CD4-positive, alpha-beta T cell (primary cell): ENCODE measurements at regions of chr12 and their contacts with region 1.

Region 1: GRCh38 chr12:106302401-106303201 is at the start of gene TCP11L2:
- DNase-seq: peak; percentile 89 to 97 (median 92)
- ATAC-seq: peak; percentile 49
- H3K4me3 ChIP-seq: peak within 1 kb of the TSS; percentile 97
- H3K4me3 Mint-ChIP-seq: peak within 1 kb of the TSS; percentile 99
- H3K27ac ChIP-seq: peak within 1 kb of the TSS; percentile 99 to 100
- H3K27ac Mint-ChIP-seq: peak within 1 kb of the TSS; percentile 99
- H3K4me1 ChIP-seq: peaks cover 49% of the 10 kb centered on the region
- H3K4me1 Mint-ChIP-seq: peaks cover 64% of the 10 kb centered on the region
- H3K27me3 ChIP-seq: no peaks in the 10 kb centered on the region
- H3K27me3 Mint-ChIP-seq: no peaks in the 10 kb centered on the region
- CTCF ChIP-seq: no peak
- total RNA-seq, gene TCP11L2: 139 to 144 TPM

Region 2: GRCh38 chr12:104986022-104986941 is 1316.3 kb before region 1 on chr12 and contains the start of gene NOPCHAP1:
- CTCF ChIA-PET with region 1: no interaction called
- POLR2A ChIA-PET with region 1: no interaction called
- intact Hi-C with region 1: loop called in 1 of 2 experiments (anchors 10 kb)
- DNase-seq: peak; percentile 62 to 89 (median 80)
- ATAC-seq: peak; percentile 99
- H3K4me3 ChIP-seq: peak within 1 kb of the TSS; percentile 73
- H3K4me3 Mint-ChIP-seq: peak within 1 kb of the TSS; percentile 97
- H3K27ac ChIP-seq: no peak within 1 kb of the TSS
- H3K27ac Mint-ChIP-seq: peak within 1 kb of the TSS; percentile 68
- H3K4me1 ChIP-seq: peaks cover 21% of the 10 kb centered on the region
- H3K4me1 Mint-ChIP-seq: peaks cover 39% of the 10 kb centered on the region
- H3K27me3 ChIP-seq: no peaks in the 10 kb centered on the region
- H3K27me3 Mint-ChIP-seq: peaks cover 4% of the 10 kb centered on the region
- CTCF ChIP-seq: no peak
- total RNA-seq, gene NOPCHAP1: 10.1 to 11.8 TPM

Region 3: DNA sequence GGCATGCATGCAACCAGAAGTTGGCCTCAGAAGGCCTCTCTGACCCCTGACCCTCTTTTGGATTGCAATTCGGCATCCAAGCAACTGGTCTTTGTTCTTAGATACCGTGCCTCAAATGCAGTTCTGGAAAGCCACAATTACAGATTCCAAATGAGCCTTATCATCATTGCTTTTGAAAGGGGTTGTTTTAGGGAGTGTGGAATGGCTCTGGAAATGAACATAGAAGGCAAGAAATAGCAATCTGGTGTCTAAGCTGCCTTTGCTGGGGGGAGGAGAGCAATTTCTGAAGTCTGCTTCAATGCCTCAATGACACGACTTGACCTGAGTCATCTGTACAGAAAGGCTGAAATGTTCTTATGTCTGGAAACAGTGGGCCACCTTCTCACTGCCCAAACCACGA is 413.9 kb before region 1 on chr12:
- CTCF ChIA-PET with region 1: no interaction called
- POLR2A ChIA-PET with region 1: no interaction called
- intact Hi-C with region 1: no loop called
- DNase-seq: no peak
- ATAC-seq: no peak
- H3K4me3 ChIP-seq: no peak overlapping the region
- H3K4me3 Mint-ChIP-seq: no peak overlapping the region
- H3K27ac ChIP-seq: no peak overlapping the region
- H3K27ac Mint-ChIP-seq: no peak overlapping the region
- H3K4me1 ChIP-seq: no peaks in the 10 kb centered on the region
- H3K4me1 Mint-ChIP-seq: no peaks in the 10 kb centered on the region
- H3K27me3 ChIP-seq: no peaks in the 10 kb centered on the region
- H3K27me3 Mint-ChIP-seq: no peaks in the 10 kb centered on the region
- CTCF ChIP-seq: no peak

Region 4: GRCh38 chr12:106247674-106248311 is 54.8 kb before region 1 on chr12 and contains the start of gene CKAP4:
- CTCF ChIA-PET with region 1: interaction called, 4 read pairs
- POLR2A ChIA-PET with region 1: interaction called, 157 read pairs
- intact Hi-C with region 1: loop called (anchors 1 to 2 kb)
- DNase-seq: peak; percentile 11 to 88 (median 54)
- ATAC-seq: peak; percentile 51
- H3K4me3 ChIP-seq: peak within 1 kb of the TSS; percentile 75
- H3K4me3 Mint-ChIP-seq: peak within 1 kb of the TSS; percentile 89
- H3K27ac ChIP-seq: peak within 1 kb of the TSS; percentile 81 to 89
- H3K27ac Mint-ChIP-seq: peak within 1 kb of the TSS; percentile 94
- H3K4me1 ChIP-seq: peaks cover 37% of the 10 kb centered on the region
- H3K4me1 Mint-ChIP-seq: peaks cover 43% of the 10 kb centered on the region
- H3K27me3 ChIP-seq: no peaks in the 10 kb centered on the region
- H3K27me3 Mint-ChIP-seq: no peaks in the 10 kb centered on the region
- CTCF ChIP-seq: no peak
- total RNA-seq, gene CKAP4: 14.7 to 15.7 TPM

Region 5: DNA sequence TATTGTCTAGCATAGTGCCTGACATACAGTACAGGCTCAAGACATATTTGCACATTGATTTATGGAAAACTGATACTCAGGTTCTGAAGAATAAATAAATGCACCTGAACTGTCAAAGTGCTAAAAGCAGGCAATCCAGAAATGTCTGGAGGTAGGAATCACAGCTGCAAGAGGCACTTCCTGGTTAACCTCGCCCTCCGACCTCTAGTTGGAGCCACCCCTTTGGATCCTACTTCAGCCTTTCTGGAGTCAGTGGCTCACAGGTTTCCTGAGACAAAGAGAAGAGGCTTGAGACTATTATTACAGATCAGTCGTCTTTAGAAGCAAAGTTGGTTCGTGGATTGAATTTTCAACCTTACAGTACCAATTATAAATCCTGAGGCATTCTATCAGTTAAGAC is 12.9 kb after region 1 on chr12:
- CTCF ChIA-PET with region 1: no interaction called
- POLR2A ChIA-PET with region 1: interaction called, 14 read pairs
- intact Hi-C with region 1: no loop called
- DNase-seq: no peak
- ATAC-seq: no peak
- H3K4me3 ChIP-seq: no peak overlapping the region
- H3K4me3 Mint-ChIP-seq: no peak overlapping the region
- H3K27ac ChIP-seq: no peak overlapping the region
- H3K27ac Mint-ChIP-seq: peak overlapping the region; percentile 8
- H3K4me1 ChIP-seq: peaks cover 7% of the 10 kb centered on the region
- H3K4me1 Mint-ChIP-seq: peaks cover 27% of the 10 kb centered on the region
- H3K27me3 ChIP-seq: no peaks in the 10 kb centered on the region
- H3K27me3 Mint-ChIP-seq: no peaks in the 10 kb centered on the region
- CTCF ChIP-seq: no peak

Region 6: GRCh38 chr12:106331599-106331998 is 29.0 kb after region 1 on chr12:
- CTCF ChIA-PET with region 1: interaction called, 4 read pairs
- POLR2A ChIA-PET with region 1: interaction called, 10 read pairs
- intact Hi-C with region 1: no loop called
- DNase-seq: no peak
- ATAC-seq: no peak
- H3K4me3 ChIP-seq: no peak overlapping the region
- H3K4me3 Mint-ChIP-seq: no peak overlapping the region
- H3K27ac ChIP-seq: no peak overlapping the region
- H3K27ac Mint-ChIP-seq: peak overlapping the region; percentile 27
- H3K4me1 ChIP-seq: no peaks in the 10 kb centered on the region
- H3K4me1 Mint-ChIP-seq: peaks cover 31% of the 10 kb centered on the region
- H3K27me3 ChIP-seq: no peaks in the 10 kb centered on the region
- H3K27me3 Mint-ChIP-seq: no peaks in the 10 kb centered on the region
- CTCF ChIP-seq: no peak

Region 7: DNA sequence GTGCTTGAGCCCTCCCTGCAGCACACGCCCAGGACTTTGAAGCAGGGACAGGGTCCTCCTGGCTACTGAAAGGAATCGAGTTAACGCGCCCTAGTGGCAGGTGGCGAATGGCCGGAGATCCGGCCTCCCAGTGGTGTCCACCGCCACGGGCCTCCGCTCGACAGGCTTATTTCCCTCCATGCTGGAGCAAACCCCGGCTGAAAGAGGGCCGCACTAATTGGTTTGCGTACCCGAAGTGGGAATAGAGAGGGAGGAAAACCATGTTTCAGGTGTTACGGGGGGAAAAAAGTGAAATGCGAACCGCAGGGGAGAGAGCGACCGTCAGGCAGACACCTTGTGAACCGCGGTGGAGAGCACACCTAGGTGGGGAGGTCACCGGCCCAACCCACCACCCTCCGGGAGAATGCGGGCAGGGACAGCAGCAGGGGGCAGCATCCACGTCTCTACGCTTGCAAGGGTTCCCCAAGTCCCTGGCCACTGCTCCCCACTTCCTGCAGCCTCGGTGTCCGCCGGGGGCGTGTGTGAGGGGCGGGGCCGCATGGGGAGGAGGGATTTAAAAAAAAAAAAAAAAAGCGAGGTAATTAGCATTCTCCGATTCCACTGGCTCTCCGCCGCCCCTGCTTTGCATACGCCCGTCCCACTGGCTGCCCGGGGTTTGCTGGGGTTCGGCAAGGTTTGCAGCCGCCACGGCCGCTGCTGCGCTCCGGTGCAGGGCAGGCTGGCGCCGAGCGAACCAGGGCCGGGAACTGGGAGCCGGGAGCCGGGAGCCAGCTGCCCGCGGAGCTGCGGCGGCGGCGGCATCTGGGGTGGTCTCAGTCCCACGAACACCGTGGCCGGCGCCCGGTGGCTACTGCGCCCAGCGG is 1015.4 kb after region 1 on chr12:
- CTCF ChIA-PET with region 1: no interaction called
- POLR2A ChIA-PET with region 1: no interaction called
- intact Hi-C with region 1: loop called in 1 of 2 experiments (anchors 2 kb)
- DNase-seq: peak; percentile 69 to 94 (median 84)
- ATAC-seq: peak; percentile 56
- H3K4me3 ChIP-seq: peak overlapping the region; percentile 95
- H3K4me3 Mint-ChIP-seq: peak overlapping the region; percentile 88
- H3K27ac ChIP-seq: peak overlapping the region in 1 of 2 donors; percentile 29
- H3K27ac Mint-ChIP-seq: peak overlapping the region; percentile 78
- H3K4me1 ChIP-seq: peaks cover 38% of the 10 kb centered on the region
- H3K4me1 Mint-ChIP-seq: peaks cover 36% of the 10 kb centered on the region
- H3K27me3 ChIP-seq: no peaks in the 10 kb centered on the region
- H3K27me3 Mint-ChIP-seq: no peaks in the 10 kb centered on the region
- CTCF ChIP-seq: peak; percentile 34

Region 8: DNA sequence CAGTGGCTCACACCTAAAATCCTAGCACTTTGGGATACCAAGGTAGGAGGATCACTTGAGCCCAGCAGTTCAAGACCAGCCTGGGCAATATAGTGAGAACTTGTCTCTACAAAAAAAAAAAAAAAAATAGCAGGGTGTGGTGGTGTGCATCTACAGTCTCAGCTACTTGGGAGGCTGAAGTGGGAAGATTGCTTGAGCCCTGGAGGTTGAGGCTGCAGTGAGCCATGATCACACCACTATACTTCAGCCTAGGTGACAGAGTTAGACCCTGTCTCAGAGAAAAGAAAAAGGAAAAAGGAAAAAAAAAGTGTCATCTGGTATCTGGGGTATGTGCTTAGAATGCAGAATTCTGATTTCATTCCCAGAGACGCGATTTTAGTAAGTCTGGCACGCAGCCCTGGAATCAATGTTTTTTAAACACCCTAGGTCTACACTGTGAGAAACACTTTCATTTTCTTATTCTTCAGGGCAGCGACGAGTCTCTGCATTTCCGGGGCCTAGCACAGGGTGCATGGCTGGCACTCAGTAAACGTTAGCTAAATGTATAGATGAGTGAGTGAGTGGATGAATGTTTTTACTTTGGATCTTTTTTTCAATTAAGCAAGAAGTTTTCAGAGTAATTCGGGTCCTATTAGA is 1139.2 kb after region 1 on chr12:
- CTCF ChIA-PET with region 1: no interaction called
- POLR2A ChIA-PET with region 1: no interaction called
- intact Hi-C with region 1: no loop called
- DNase-seq: peak in 3 of 14 experiments; percentile 11 to 30 (median 24)
- ATAC-seq: peak; percentile 57
- H3K4me3 ChIP-seq: peak overlapping the region; percentile 2
- H3K4me3 Mint-ChIP-seq: peak overlapping the region; percentile 75
- H3K27ac ChIP-seq: no peak overlapping the region
- H3K27ac Mint-ChIP-seq: peak overlapping the region; percentile 56
- H3K4me1 ChIP-seq: no peaks in the 10 kb centered on the region
- H3K4me1 Mint-ChIP-seq: peaks cover 29% of the 10 kb centered on the region
- H3K27me3 ChIP-seq: no peaks in the 10 kb centered on the region
- H3K27me3 Mint-ChIP-seq: no peaks in the 10 kb centered on the region
- CTCF ChIP-seq: no peak